ENCODE measurements at regions of chr11 and their contacts with region 1.

Region 1: DNA sequence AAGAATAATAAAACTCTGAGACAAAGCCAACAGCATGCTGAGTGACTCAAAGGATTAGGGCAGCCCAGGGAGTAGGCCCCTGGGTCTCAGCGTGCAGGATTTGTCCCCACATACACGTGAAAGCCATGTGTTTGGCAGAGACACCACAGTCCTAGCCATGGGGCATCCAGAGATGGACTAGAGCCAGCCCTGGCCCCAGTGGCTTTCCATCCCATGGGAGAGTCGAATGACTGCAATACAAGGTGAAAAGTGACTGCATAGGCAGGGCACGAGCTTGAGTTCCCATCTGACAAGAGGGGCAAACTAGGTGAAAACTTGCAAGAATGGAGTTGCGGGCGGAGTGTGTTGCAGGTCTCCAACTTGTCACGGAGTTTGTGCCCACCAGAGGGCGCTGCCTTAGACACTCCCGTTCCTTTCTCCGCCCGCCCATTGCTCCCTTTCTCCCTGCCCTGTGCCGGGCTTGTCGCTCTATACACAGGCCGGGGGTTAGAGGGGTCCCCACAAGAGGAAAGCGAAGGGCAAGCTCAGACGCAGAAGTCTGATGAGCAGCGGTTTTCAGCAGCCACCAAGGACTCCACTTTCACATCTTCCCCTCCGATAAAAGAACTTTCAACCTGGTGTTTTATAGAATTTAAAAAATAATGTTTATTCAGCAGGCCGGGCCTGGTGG is 24.2 kb downstream of the TSKU start:
- DNase-seq: peak; percentile 96
- ATAC-seq: peak; percentile 87

Region 2: GRCh38 chr11:76919887-76920746 is 112.8 kb after region 1 on chr11:
- intact Hi-C with region 1: loop called (anchors 5 kb)
- DNase-seq: peak; percentile 75
- ATAC-seq: peak; percentile 92

Region 3: DNA sequence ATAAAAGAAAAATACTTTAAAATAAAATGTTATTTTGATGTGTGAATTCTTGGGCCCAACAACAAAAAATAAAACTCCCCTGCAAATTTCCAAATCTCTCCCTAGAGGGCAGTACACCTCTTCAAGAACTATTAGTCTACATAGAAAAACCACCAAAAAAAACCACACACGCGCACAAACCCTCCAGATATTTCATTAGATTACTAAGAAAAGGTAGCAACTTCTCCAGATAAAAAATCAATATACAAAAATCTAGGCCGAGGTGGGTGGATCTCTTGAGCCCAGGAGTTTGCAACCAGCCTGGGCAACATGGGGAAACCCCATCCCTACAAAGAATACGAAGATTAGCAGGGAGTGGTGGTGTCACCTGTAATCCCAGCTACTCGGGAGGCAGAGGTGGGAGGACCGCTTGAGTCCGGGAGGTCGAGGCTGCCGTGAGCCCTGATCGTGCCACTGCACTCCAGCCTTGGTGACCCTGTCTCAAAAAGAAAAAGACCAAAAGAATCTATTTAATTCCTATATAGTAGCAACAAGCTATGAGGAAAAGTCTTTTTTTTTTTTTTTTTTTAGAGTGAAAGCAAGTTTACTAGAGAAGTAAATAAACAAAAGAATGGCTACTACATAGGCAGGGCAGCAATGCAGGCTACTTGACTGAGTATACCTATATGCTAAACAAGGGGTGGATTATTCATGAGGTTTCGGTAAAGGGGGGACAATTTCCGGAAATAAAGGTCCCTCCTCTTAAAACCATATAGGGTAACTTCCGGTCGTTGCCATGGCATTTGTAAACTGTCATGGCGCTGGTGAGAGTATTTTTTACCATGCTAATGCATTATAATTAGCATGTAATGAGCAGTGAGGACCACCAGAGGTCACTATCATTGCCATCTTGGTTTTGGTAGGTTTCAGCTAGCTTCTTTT is 239.9 kb after region 1 on chr11:
- intact Hi-C with region 1: loop called (anchors 10 kb)
- DNase-seq: peak; percentile 80
- ATAC-seq: peak; percentile 96

Measured in sciatic nerve (tissue), 2 donors.